Mammary epithelial cell (primary cell): ENCODE measurements at regions of chr4 and their contacts with region 1.

Region 1: DNA sequence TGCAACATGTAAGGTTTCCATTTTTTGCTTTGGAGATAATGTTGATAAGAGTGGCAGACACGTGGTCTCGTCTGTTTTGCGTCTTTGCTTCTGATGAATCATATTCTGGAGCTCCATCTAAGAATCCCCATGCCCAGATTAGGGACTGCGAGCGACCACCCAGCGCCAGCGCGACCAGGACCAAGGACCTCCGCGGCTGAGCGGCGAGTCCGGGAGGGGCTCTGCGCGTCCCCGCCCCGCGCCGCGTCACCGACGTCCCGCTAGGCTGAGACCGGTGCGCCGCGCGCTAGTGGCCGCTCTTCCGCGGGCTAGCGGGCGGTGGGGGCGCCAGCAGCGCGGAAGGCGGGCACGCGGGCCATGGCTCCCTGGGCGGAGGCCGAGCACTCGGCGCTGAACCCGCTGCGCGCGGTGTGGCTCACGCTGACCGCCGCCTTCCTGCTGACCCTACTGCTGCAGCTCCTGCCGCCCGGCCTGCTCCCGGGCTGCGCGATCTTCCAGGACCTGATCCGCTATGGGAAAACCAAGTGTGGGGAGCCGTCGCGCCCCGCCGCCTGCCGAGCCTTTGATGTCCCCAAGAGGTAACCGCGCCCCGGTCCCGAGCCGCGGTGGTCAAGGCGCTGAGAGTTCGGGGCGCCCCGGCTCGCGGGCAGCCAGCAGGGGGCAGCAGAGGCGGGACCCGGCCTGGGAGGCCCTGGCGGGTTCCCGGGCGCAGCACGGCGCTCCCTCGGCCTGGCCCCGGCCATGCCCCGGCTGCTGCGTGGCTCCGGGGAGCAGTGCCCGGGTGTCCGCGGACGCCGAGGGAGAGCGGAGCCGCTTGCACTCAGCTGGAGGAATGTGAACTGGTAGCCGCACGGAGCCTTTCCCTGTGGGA is at the start of gene SRD5A3:
- DNase-seq: peak; percentile 73
- H3K4me3 ChIP-seq: peak within 1 kb of the TSS; percentile 78 to 97 (median 81)
- H3K27ac ChIP-seq: peak within 1 kb of the TSS; percentile 59
- H3K4me1 ChIP-seq: peaks cover 9% of the 10 kb centered on the region
- H3K27me3 ChIP-seq: no peaks in the 10 kb centered on the region
- CTCF ChIP-seq: peak; percentile 53 to 80
- total RNA-seq, gene SRD5A3: 12.1 to 12.5 TPM

Region 2: GRCh38 chr4:55358668-55359067 is 12.5 kb after region 1 on chr4:
- CTCF ChIA-PET with region 1: no interaction called
- dilution Hi-C with region 1: no loop called
- in situ Hi-C with region 1: no loop called
- intact Hi-C with region 1: loop called (anchors 1 kb)
- DNase-seq: peak; percentile 83
- H3K4me3 ChIP-seq: no peak overlapping the region
- H3K27ac ChIP-seq: no peak overlapping the region
- H3K4me1 ChIP-seq: peaks cover 25% of the 10 kb centered on the region
- H3K27me3 ChIP-seq: no peaks in the 10 kb centered on the region
- CTCF ChIP-seq: no peak

Region 3: DNA sequence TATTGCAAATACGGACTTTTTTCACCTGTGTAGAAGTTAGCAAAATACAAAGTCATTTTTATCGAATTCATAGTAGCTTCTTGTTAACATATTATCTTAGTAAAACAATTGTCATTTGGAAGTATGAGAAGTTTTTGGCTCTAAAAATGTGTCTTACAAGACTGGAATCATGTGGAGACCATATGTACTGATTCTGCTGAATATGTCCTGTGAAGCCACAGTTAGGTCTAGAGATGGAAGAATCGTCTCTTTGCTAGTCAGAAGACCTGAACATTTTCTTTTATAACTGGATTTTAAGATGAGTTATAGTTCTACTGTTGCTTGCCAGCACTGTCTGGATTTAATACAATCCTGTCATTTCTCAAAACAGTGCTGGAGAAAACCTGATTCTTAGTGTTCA is 78.6 kb after region 1 on chr4:
- CTCF ChIA-PET with region 1: no interaction called
- dilution Hi-C with region 1: no loop called
- in situ Hi-C with region 1: no loop called
- intact Hi-C with region 1: loop called (anchors 5 kb)
- DNase-seq: no peak
- H3K4me3 ChIP-seq: no peak overlapping the region
- H3K27ac ChIP-seq: no peak overlapping the region
- H3K4me1 ChIP-seq: peaks cover 4% of the 10 kb centered on the region
- H3K27me3 ChIP-seq: no peaks in the 10 kb centered on the region
- CTCF ChIP-seq: no peak

Region 4: GRCh38 chr4:55435141-55435841 is 89.1 kb after region 1 on chr4:
- CTCF ChIA-PET with region 1: no interaction called
- dilution Hi-C with region 1: no loop called
- in situ Hi-C with region 1: no loop called
- intact Hi-C with region 1: no loop called
- DNase-seq: no peak
- H3K4me3 ChIP-seq: no peak overlapping the region
- H3K27ac ChIP-seq: no peak overlapping the region
- H3K4me1 ChIP-seq: no peaks in the 10 kb centered on the region
- H3K27me3 ChIP-seq: no peaks in the 10 kb centered on the region
- CTCF ChIP-seq: peak; percentile 12 to 39

Region 5: GRCh38 chr4:55635741-55636655 is 289.8 kb after region 1 on chr4 and contains the start of gene NMU:
- CTCF ChIA-PET with region 1: no interaction called
- dilution Hi-C with region 1: no loop called
- in situ Hi-C with region 1: no loop called
- intact Hi-C with region 1: loop called (anchors 5 kb)
- DNase-seq: peak; percentile 52
- H3K4me3 ChIP-seq: peak within 1 kb of the TSS; percentile 37 to 63 (median 53)
- H3K27ac ChIP-seq: no peak within 1 kb of the TSS
- H3K4me1 ChIP-seq: peaks cover 10% of the 10 kb centered on the region
- H3K27me3 ChIP-seq: no peaks in the 10 kb centered on the region
- CTCF ChIP-seq: peak in 1 of 2 donors; percentile 38
- total RNA-seq, gene NMU: 1.7 TPM in 1 of 2 donors, not detected in the other